Lower leg skin (tissue), 4 donors: ENCODE measurements at regions of chr7 and their contacts with region 1.

Region 1: DNA sequence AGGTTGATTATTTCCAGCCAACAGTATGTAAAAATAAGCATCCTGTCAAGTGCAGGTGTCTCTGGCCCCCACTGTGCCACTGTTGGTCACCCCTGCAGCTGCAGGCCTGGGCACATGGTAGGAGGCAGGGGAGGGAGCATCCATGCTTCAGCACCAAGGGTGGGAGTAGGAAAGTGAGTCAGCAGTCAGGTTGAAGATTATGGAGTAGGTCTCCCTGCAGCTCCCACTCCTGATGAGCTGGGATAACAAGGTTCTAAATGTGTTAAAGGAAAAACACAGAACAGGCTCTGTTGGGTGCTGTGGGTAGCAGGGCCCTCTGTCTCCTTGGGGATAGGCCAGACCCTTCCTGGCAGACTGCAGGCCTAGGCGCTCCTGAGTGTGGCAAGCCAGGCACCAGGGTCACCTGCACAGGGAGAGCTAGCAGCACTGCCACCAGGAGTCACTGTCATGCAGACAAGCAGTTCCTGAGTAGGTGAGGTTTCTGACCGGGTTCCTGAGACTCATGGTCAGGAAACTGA is 59.3 kb downstream of the NUDCD3 start:
- DNase-seq: no peak
- H3K4me3 ChIP-seq: no peak overlapping the region
- CTCF ChIP-seq: no peak
- POLR2A ChIP-seq: no peak

Region 2: DNA sequence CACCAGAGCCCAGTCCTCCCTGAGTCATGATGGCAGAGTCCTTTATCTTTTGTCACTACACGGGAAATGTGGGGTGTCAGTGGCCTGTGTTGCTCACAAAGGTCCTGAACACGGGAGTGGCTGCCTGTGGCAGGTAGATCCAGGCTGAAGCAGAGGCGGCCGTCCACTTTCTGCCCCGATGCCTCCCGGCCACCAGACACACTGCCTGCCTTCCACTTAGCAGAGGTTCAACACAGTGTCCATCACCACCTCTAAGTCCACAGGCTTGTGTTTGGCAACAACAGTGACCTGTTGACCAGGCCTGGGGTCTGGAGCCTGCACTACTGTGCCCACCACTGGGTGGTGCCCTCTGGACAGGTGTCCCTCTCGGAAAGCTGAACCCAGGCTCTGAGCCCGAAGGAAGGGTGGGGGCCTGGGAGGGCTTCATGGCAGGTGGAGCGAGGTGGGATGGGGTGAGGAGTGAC is 55.9 kb before region 1 on chr7:
- intact Hi-C with region 1: loop called (anchors 10 kb)
- DNase-seq: peak in 1 of 2 donors; percentile 58
- H3K4me3 ChIP-seq: no peak overlapping the region
- CTCF ChIP-seq: no peak
- POLR2A ChIP-seq: no peak

Region 3: DNA sequence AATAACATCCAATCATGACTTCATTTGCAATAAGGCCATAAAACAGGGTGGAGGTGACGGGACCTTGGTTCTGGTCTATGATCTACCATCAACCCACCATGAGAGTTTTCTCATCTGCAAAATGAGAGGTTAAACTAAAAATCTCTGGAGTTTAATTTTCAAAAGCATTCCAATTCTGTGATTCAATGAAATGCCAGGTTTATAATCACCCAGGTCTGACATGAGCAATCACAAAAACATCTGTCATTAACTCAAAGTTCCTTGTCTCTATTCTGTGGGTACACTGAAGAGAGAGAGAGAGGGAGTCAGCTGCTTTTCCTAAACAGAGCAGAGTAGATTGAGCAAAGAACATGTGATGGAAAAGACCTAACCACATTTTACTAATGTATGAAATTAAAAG is 16.1 kb before region 1 on chr7:
- intact Hi-C with region 1: no loop called
- DNase-seq: no peak
- H3K4me3 ChIP-seq: no peak overlapping the region
- CTCF ChIP-seq: no peak
- POLR2A ChIP-seq: no peak